ENCODE measurements at regions of chr1 and their contacts with region 1.

Region 1: DNA sequence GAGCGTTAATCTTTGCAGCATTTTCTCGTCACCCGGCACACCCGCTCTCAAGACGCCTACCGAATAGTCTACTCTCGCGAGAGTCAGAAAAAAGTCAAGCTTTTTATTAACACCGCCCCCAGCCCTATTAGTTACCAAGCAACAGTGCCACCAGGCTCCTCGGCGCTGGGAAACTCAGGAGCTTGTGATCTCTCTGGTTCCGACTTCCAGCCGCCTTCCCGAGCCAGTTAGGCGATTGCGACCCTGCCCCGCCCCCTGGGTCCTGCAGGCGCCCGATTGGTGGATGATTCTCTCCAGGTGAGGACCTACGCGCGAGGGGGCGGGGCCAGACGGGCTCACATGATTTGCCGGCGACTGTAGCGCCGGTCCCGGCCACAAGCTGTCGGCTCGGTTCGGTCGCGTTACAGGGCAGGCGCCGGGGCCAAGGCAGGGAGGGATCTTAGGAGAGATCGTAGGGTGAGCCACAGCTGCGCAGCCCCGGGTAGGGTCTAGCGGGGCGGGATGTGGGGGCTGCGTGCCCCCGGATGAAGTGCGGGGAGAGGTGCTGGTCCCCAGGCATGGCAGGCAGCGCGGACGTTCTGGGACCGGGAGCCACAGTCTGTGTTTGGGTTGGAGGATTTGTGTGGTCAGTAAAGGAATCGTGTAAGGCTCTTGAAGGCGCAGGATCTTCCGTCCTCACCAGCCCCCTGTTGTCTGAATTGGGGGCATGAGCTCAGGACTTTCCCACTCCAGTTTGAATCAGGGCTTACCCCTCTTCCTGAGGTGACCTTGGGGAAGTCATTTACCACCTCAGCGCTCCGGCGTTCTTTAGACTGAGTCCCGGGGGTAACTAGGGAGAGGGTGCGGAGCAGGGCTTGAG is at the start of gene PFKFB2:
- DNase-seq: peak; percentile 96
- ATAC-seq: peak; percentile 93
- H3K4me3 Mint-ChIP-seq: peak within 1 kb of the TSS; percentile 86
- H3K27ac Mint-ChIP-seq: peak within 1 kb of the TSS; percentile 92
- H3K4me1 Mint-ChIP-seq: peaks cover 46% of the 10 kb centered on the region
- H3K27me3 Mint-ChIP-seq: no peaks in the 10 kb centered on the region
- total RNA-seq, gene PFKFB2: 5.0 to 6.6 TPM

Region 2: DNA sequence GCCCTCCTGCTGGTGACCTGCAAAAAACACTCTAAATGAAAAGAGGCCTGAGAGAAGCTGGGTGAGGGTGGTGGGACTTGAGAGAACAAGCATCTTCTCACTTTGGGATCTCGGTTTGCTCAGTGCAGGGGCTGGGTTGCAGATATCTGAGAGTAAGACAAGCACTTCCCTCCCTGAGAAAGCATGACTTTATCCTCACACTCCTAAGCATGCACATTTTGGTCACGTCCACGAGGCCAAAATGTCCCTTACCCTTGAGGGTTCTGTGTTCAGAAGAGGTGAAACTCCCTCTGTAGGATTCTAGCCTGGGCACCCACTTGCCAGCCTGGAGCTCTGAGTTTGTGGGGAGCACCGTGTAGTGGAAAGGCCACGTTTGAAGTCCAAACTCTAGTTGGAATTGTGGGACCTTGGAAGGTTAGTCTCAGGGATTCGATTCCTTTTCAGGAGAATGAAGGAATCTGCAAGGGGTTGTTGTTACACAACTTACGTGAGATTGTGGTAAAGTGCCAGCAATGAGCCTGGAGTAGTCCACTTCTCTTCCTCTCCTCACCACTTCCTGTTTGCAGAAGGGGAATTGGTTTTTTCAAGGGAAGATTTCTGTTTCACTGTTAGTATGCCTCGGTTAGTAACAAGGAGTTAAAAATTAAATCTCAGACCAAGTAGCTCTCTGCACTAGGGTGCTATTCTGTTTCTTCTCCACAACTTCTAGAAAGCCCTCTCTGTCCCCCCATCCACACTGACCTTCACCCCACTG is 85.9 kb before region 1 on chr1:
- CTCF ChIA-PET with region 1: no interaction called
- POLR2A ChIA-PET with region 1: no interaction called
- DNase-seq: no peak
- ATAC-seq: peak; percentile 57
- H3K4me3 Mint-ChIP-seq: peak overlapping the region; percentile 12
- H3K27ac Mint-ChIP-seq: peak overlapping the region; percentile 33
- H3K4me1 Mint-ChIP-seq: peaks cover 48% of the 10 kb centered on the region
- H3K27me3 Mint-ChIP-seq: peaks cover 26% of the 10 kb centered on the region

Region 3: GRCh38 chr1:206992790-206993189 is 60.4 kb before region 1 on chr1:
- CTCF ChIA-PET with region 1: no interaction called
- POLR2A ChIA-PET with region 1: no interaction called
- DNase-seq: no peak
- ATAC-seq: no peak
- H3K4me3 Mint-ChIP-seq: no peak overlapping the region
- H3K27ac Mint-ChIP-seq: no peak overlapping the region
- H3K4me1 Mint-ChIP-seq: no peaks in the 10 kb centered on the region
- H3K27me3 Mint-ChIP-seq: peaks cover 43% of the 10 kb centered on the region

Region 4: DNA sequence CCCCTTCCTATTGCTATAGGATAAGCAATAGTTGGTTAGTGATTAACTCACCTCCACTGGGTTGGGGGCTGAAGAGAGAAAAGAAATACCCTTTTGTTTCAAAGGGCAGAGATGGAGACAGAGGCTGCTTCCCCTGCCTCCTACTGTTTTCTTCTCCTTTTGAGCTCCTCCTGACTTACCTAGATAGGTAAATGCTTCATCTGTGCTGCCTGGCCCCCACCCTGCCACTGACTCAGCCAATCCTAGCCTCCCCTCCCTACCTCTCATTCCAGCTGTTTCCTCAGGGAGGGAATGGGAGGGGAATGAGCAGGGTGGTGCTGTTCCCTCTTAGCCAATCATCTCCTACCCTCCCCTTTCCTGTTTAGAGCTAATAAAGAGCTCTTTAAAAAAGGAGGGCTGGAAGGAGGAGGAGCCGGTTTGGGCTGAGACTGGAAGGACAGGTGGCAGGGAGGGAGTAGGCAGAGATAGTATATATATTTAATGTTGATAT is 20.6 kb before region 1 on chr1 and contains the start of gene C1orf116:
- CTCF ChIA-PET with region 1: interaction called, 13 read pairs
- POLR2A ChIA-PET with region 1: no interaction called
- DNase-seq: no peak
- ATAC-seq: no peak
- H3K4me3 Mint-ChIP-seq: no peak within 1 kb of the TSS
- H3K27ac Mint-ChIP-seq: no peak within 1 kb of the TSS
- H3K4me1 Mint-ChIP-seq: no peaks in the 10 kb centered on the region
- H3K27me3 Mint-ChIP-seq: peaks cover 43% of the 10 kb centered on the region
- total RNA-seq, gene C1orf116: not detected

Region 5: GRCh38 chr1:207069858-207070506 is 16.8 kb after region 1 on chr1:
- CTCF ChIA-PET with region 1: interaction called, 50 read pairs
- POLR2A ChIA-PET with region 1: interaction called, 3 read pairs
- DNase-seq: no peak
- ATAC-seq: peak; percentile 8
- H3K4me3 Mint-ChIP-seq: no peak overlapping the region
- H3K27ac Mint-ChIP-seq: peak overlapping the region; percentile 88
- H3K4me1 Mint-ChIP-seq: peaks cover 53% of the 10 kb centered on the region
- H3K27me3 Mint-ChIP-seq: no peaks in the 10 kb centered on the region

Region 6: GRCh38 chr1:207077470-207078377 is 24.6 kb after region 1 on chr1:
- CTCF ChIA-PET with region 1: interaction called, 67 read pairs
- POLR2A ChIA-PET with region 1: no interaction called
- DNase-seq: peak; percentile 84
- ATAC-seq: peak; percentile 85
- H3K4me3 Mint-ChIP-seq: no peak overlapping the region
- H3K27ac Mint-ChIP-seq: no peak overlapping the region
- H3K4me1 Mint-ChIP-seq: peaks cover 12% of the 10 kb centered on the region
- H3K27me3 Mint-ChIP-seq: peaks cover 8% of the 10 kb centered on the region

Region 7: GRCh38 chr1:207444514-207445217 is 391.5 kb after region 1 on chr1:
- CTCF ChIA-PET with region 1: no interaction called
- POLR2A ChIA-PET with region 1: no interaction called
- DNase-seq: no peak
- ATAC-seq: no peak
- H3K4me3 Mint-ChIP-seq: no peak overlapping the region
- H3K27ac Mint-ChIP-seq: no peak overlapping the region
- H3K4me1 Mint-ChIP-seq: no peaks in the 10 kb centered on the region
- H3K27me3 Mint-ChIP-seq: peaks cover 18% of the 10 kb centered on the region

Measured in activated CD8-positive, alpha-beta T cell treated with anti-CD3 and anti-CD28 coated beads, Interleukin-2, amount 10 ng/mL, durations not matched to agents 7 days and 5 days (primary cell).